ENCODE measurements at regions of chr7 and their contacts with region 1.

Region 1: GRCh38 chr7:100889761-100890634 is 483 bp upstream of the UFSP1 start:
- DNase-seq: peak; percentile 83 to 97 (median 94)
- H3K4me3 ChIP-seq: peak overlapping the region; percentile 56 to 94 (median 80)
- H3K27ac ChIP-seq: peak overlapping the region; percentile 50 to 97 (median 90)
- H3K27me3 ChIP-seq: peaks cover 0 to 6% (median 0%) of the 10 kb centered on the region in 45 donors
- CTCF ChIP-seq: peak in 14 of 56 donors; percentile 1 to 45 (median 11)

Region 2: GRCh38 chr7:100837099-100837836 is 52.7 kb before region 1 on chr7:
- intact Hi-C with region 1: loop called in 1 of 2 experiments (anchors 2 kb)
- DNase-seq: peak; percentile 88 to 95 (median 92)
- H3K4me3 ChIP-seq: peak overlapping the region; percentile 24 to 77 (median 62)
- H3K27ac ChIP-seq: peak overlapping the region; percentile 18 to 96 (median 86)
- H3K27me3 ChIP-seq: no peaks in the 10 kb centered on the region
- CTCF ChIP-seq: peak in 50 of 56 donors; percentile 4 to 68 (median 39)

Region 3: DNA sequence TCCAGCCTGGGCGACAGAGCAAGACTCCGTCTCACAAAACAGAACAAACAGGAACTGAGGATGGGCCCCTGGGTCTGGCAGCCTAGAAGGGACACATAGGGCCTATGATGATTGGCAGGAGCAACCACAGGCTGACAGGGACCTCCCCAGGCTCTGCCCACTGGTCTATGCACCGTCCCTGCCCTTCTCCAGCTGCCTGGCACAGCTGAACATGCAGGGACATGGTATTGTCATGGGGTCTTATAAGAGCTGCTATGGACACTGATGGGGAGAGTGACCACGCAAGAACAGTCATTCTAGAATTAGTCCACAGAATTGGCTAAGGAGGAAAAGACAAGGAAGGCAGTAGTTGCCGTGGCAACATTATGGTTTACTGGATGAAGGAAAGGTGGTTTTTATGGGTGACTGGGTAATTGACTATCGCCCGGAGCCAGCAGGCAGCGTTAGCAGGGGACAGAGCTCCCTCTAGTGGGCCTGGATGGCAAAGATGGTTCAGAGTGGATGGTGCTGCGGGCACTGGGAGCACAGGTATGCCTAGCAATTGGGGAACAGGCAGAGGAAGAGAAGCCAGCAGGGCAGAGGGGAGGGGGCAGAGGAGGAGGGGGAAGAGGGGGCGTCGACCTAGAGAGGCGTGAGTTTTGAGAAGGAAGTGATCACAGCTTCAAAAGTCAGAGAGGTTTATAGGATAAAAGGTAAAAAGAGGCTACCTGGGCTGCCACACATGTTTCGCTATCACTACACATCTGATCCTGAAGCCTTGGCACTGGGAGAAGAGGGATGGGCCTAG is 187.5 kb after region 1 on chr7:
- intact Hi-C with region 1: loop called in 1 of 2 experiments (anchors 5 kb)
- DNase-seq: peak in 9 of 10 donors; percentile 62 to 85 (median 79)
- H3K4me3 ChIP-seq: no peak overlapping the region
- H3K27ac ChIP-seq: no peak overlapping the region
- H3K27me3 ChIP-seq: no peaks in the 10 kb centered on the region
- CTCF ChIP-seq: peak; percentile 37 to 83 (median 75)

Region 4: GRCh38 chr7:101165075-101165957 is 275.3 kb after region 1 on chr7 and contains the start of gene VGF:
- intact Hi-C with region 1: loop called in 1 of 2 experiments (anchors 10 kb)
- DNase-seq: peak; percentile 81 to 92 (median 89)
- H3K4me3 ChIP-seq: peak within 1 kb of the TSS in 57 of 59 donors; percentile 19 to 66 (median 47)
- H3K27ac ChIP-seq: peak within 1 kb of the TSS in 31 of 59 donors; percentile 2 to 89 (median 44)
- H3K27me3 ChIP-seq: peaks cover 0 to 84% (median 62%) of the 10 kb centered on the region in 45 donors
- CTCF ChIP-seq: peak in 29 of 56 donors; percentile 1 to 48 (median 25)
- total RNA-seq, gene VGF: 5.8 to 171 (median 31.4) TPM

Region 5: GRCh38 chr7:101287032-101287431 is 397.0 kb after region 1 on chr7:
- intact Hi-C with region 1: loop called in 1 of 2 experiments (anchors 10 kb)
- DNase-seq: no peak
- H3K4me3 ChIP-seq: no peak overlapping the region
- H3K27ac ChIP-seq: no peak overlapping the region
- H3K27me3 ChIP-seq: peaks cover 0 to 13% (median 4%) of the 10 kb centered on the region in 45 donors
- CTCF ChIP-seq: no peak